GM10248 (cell line): ENCODE measurements at regions of chr16 and their contacts with region 1.

Region 1: DNA sequence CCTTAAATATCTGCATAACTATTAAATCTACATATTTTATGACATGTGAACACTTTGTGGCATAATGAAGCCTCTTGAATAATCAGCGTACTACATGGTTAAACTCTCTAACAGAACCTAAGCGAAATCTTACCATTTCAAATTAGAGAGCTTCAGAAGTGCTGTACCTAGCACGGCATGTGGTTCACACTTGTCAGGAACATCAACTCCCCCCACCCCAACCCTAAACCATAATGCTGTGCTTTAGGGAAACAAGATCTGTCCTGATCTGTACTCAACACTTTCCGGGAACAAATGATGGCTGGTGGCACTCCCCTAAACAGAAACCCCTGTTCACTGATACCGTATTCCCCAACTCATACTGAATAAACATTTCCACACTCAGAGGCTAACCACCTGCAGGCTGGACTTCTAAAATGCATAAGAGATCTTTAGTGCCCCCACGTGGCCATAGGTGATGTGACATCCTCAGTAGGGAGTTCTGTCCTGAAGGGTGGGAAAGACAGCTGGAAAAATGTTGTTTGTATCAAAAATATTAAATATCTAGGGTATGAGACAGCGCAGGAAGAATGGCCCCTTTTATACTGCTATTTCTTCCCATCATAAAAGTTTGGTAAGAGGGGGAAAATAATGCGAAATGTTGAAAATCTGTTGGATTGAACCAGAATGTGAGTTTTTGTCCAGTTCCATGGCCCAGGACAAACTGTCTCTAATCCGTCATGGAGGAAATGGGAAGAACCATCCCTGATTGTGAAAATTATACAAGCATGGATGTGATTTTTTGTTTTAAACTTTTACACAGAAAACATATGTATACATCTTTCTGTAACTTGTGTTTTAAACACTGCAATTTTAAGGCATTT is 88.6 kb downstream of the USP31 start:
- DNase-seq: peak; percentile 69
- CTCF ChIP-seq: peak; percentile 74

Region 2: DNA sequence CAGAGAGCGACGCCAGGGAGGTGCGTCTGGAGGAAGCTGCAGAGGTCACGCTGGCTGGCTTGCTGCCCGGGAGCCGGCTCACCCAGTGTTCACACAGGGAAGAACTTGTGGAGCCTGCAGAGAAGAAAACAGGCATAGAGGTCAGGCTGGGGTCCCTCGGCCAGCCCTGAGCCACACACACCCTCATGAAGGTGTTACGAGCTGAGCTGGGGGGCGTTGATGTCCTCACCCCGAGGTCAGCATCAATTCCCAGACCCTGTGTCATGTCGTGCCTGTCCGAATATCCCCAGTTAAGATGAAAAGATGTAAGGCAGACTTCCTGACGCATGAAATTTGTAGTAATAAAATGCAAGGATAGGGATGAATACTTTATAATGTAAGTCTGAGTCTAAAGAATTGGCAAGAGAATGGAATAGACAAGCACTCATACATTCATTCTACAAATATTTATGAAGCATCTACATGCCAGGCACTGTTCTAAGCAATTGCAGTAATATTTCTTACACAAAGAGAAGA is 11.5 kb after region 1 on chr16:
- CTCF ChIA-PET with region 1: interaction called, 16 read pairs
- POLR2A ChIA-PET with region 1: no interaction called
- DNase-seq: no peak
- CTCF ChIP-seq: no peak